ENCODE measurements at regions of chr1 and their contacts with region 1.

Region 1: DNA sequence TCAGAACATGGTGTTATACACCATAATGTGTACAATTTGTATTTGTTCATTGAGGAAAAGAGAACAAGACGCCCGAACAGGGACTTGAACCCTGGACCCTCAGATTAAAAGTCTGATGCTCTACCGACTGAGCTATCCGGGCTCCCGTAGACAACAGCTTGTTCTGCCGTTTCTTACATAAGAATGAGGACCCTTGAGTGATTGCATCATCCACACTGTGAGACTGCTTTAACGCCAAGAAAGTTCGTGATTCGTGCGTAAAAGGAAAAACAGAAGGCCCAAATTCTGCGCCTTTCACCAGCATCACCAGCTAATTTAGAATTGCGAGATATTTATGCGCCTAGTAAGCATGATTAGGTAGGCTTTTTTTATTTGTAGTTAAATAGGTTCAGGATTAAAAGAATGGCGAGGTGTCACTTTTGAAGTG is 9.2 kb upstream of the MDM4 start:
- DNase-seq: peak; percentile 91
- ATAC-seq: peak; percentile 72
- H3K4me3 Mint-ChIP-seq: peak overlapping the region; percentile 89
- H3K27ac Mint-ChIP-seq: peak overlapping the region; percentile 99
- H3K4me1 Mint-ChIP-seq: peaks cover 28% of the 10 kb centered on the region
- H3K27me3 Mint-ChIP-seq: peaks cover 2% of the 10 kb centered on the region

Region 2: DNA sequence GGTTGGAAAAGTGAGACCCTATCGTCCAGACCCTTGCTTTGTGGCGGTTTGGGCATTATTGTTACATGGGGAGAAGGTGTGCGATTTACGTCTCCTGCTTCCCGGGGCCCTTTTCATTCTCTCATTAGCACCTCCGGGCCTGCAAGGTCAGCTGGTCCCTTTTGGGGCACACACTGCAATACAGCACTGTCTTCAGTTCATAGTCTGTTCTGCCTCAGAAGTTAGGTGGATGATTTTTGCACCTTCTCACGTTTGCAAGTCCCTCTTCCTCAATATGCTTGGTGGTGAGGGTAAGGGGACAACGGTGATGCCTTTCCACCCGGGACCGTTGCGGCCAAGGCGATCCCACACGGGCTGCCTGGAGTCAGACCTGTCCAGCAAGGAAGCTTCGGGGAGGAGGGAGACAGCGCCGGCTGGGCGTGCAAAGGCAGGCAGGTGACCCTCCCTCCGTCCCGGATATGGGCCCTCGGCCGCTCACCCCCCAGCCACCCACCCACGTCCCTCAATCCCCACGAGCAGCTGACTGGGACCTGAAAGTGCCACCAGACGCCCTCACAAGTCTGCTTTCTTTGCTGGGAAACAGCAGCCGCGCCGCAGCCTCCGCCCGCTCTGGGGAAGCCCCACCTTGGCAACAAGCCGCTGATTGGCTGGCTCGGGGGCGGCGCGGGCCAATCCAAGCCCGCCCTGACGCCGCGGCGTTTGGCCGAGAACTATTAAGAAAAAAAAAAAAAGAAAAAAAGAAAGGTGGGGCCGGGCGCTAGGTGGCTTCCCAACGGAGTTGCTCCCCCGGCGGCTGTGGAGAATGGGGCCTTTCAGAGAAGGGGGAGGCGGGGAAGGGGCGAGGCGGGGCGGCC is 1179.9 kb before region 1 on chr1:
- CTCF ChIA-PET with region 1: no interaction called
- POLR2A ChIA-PET with region 1: no interaction called
- intact Hi-C with region 1: loop called in 1 of 2 experiments (anchors 10 kb)
- DNase-seq: peak; percentile 97
- ATAC-seq: peak; percentile 84
- H3K4me3 Mint-ChIP-seq: peak overlapping the region; percentile 72
- H3K27ac Mint-ChIP-seq: peak overlapping the region; percentile 96
- H3K4me1 Mint-ChIP-seq: peaks cover 66% of the 10 kb centered on the region
- H3K27me3 Mint-ChIP-seq: no peaks in the 10 kb centered on the region

Region 3: GRCh38 chr1:204162231-204163074 is 344.5 kb before region 1 on chr1:
- CTCF ChIA-PET with region 1: interaction called, 5 read pairs
- POLR2A ChIA-PET with region 1: no interaction called
- intact Hi-C with region 1: loop called in 1 of 2 experiments (anchors 1 kb)
- DNase-seq: peak; percentile 88
- ATAC-seq: peak; percentile 98
- H3K4me3 Mint-ChIP-seq: no peak overlapping the region
- H3K27ac Mint-ChIP-seq: no peak overlapping the region
- H3K4me1 Mint-ChIP-seq: peaks cover 1% of the 10 kb centered on the region
- H3K27me3 Mint-ChIP-seq: peaks cover 7% of the 10 kb centered on the region

Region 4: DNA sequence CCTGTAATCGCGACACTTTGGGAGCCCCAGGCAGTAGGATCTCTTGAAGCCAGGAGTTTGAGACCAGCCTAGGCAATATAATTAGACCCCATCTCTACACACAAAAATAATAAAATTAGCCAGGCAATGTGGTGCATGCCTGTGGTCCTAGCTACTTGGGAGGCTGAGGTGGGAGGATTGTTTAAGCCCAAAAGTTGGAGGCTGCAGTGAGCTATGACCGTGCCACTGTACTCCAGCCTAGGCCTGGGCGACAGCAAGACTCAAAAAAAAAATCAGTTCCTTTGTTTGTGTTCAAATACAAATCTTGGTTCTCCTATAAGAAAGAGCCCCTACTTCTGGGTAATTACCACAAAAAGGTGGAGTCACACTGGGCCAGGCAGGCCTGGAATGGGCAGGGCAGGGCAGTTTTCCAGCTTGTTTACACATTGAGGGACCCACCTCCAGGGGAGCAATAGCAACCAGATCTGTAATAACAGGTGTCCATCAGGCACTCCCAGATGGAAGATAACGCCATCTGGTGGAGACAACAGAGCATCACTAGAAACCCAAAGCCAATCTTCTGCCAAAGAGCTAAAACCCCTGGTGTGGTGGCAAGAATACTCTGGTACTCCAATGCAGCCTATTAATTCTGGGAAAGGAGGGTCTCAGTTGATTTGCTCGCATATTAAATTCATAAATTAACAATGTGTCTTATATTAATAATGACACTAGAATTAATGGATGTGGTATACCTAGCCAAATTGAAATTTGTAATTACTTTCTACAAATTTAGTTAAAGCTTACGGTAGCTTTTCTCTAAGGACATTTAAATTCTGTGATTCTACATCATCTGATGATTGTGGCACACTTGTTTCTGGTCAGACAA is 108.5 kb before region 1 on chr1:
- CTCF ChIA-PET with region 1: interaction called, 20 read pairs
- POLR2A ChIA-PET with region 1: no interaction called
- intact Hi-C with region 1: no loop called
- DNase-seq: peak; percentile 70
- ATAC-seq: peak; percentile 95
- H3K4me3 Mint-ChIP-seq: no peak overlapping the region
- H3K27ac Mint-ChIP-seq: peak overlapping the region; percentile 47
- H3K4me1 Mint-ChIP-seq: peaks cover 2% of the 10 kb centered on the region
- H3K27me3 Mint-ChIP-seq: no peaks in the 10 kb centered on the region

Region 5: GRCh38 chr1:204446370-204447111 is 60.4 kb before region 1 on chr1:
- CTCF ChIA-PET with region 1: interaction called, 910 read pairs
- POLR2A ChIA-PET with region 1: no interaction called
- intact Hi-C with region 1: loop called (anchors 1 kb)
- DNase-seq: peak; percentile 86
- ATAC-seq: peak; percentile 82
- H3K4me3 Mint-ChIP-seq: no peak overlapping the region
- H3K27ac Mint-ChIP-seq: peak overlapping the region; percentile 86
- H3K4me1 Mint-ChIP-seq: peaks cover 49% of the 10 kb centered on the region
- H3K27me3 Mint-ChIP-seq: no peaks in the 10 kb centered on the region

Region 6: DNA sequence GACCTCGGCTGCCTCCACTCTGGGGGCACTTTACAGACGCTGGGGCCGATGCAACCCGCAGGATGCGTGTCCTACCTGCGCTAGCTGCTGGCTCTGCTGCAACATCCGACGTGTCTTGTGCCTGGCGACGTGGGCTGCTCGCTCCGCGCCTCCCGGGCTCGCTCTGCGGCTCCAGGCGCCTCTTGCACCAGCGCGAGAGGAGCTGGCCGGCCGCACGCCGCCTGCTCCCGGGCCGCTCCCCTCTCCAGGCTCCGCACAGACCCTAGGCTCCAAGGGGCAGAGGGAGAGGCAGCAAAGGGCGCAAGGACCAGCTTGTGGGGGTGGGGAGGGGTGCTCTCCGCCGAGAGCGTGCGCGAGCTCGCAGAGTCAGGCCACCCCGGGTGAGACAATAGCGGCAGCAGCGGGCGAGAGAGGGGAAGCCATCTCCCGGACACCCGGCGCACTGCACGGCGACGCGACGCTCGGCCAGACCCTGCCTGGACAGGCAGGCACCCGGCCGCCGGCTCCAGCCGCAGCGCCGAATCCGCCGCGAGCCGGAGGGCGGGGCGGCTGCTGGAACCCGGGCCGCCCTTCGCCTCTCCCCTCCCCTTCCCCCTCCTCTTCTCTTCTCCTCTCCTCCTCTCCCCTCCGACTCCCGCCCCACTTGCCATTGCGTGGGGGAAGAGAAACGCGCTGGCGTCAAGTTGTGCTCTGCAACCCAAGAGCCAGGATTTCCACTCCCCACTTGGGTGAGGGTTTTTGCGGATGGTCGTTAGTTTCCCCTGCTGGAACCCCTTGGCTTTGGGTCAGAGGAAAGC is 12.5 kb before region 1 on chr1 and contains the start of gene PIK3C2B:
- CTCF ChIA-PET with region 1: interaction called, 40 read pairs
- POLR2A ChIA-PET with region 1: interaction called, 5 read pairs
- intact Hi-C with region 1: loop called in 1 of 2 experiments (anchors 1 kb)
- DNase-seq: peak; percentile 86
- ATAC-seq: peak; percentile 77
- H3K4me3 Mint-ChIP-seq: peak within 1 kb of the TSS; percentile 95
- H3K27ac Mint-ChIP-seq: peak within 1 kb of the TSS; percentile 91
- H3K4me1 Mint-ChIP-seq: peaks cover 62% of the 10 kb centered on the region
- H3K27me3 Mint-ChIP-seq: no peaks in the 10 kb centered on the region
- total RNA-seq, gene PIK3C2B: 38.2 to 44.0 TPM

Region 7: DNA sequence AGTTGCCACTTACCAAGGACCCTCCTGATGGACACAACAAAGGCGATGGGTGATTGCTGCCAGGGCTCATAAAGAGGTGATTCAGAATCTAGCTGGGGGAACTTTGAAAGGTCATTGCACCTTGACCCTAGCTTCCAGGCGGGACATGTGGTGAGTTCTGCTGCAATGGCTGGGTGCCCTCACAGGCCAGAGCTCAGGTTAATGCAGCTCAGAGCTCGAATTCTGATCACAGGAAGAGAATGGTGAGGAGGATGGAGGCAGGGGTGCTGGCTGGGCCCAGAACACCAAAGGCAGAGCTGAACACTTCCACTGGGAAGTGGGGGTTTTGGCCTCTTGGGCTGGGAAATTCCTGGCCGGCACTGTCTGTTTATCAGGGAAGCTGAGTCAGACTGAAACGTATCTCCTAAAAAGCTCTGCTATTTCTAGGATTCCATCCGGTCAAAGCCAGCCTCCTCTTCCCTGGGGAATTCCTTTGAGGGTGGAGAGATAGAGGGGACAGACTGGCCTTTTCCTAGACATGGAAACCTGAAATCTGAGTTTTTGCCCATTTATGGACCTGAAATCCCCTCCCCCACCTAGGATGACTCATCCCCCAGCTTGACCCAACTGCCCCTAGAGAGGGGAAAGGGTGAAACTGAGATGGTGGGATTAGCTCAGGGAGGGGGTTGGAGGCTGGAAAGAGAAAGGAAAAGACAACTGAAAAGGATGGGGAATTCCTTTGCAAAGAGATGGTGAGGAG is 787.4 kb after region 1 on chr1:
- CTCF ChIA-PET with region 1: no interaction called
- POLR2A ChIA-PET with region 1: no interaction called
- intact Hi-C with region 1: no loop called
- DNase-seq: no peak
- ATAC-seq: no peak
- H3K4me3 Mint-ChIP-seq: no peak overlapping the region
- H3K27ac Mint-ChIP-seq: peak overlapping the region; percentile 33
- H3K4me1 Mint-ChIP-seq: peaks cover 49% of the 10 kb centered on the region
- H3K27me3 Mint-ChIP-seq: no peaks in the 10 kb centered on the region